Activated T-helper 2 cell treated with anti-CD3 and anti-CD28 coated beads, Interferon-gamma antibody, Interleukin-2, Interleukin-4, amounts not matched to agents 10 μg/mL and 5 μg/mL and 100 μg/mL, durations not matched to agents 14 hours and 24 hours and 36 hours (primary cell): ENCODE measurements at regions of chr9 and their contacts with region 1.

Region 1: DNA sequence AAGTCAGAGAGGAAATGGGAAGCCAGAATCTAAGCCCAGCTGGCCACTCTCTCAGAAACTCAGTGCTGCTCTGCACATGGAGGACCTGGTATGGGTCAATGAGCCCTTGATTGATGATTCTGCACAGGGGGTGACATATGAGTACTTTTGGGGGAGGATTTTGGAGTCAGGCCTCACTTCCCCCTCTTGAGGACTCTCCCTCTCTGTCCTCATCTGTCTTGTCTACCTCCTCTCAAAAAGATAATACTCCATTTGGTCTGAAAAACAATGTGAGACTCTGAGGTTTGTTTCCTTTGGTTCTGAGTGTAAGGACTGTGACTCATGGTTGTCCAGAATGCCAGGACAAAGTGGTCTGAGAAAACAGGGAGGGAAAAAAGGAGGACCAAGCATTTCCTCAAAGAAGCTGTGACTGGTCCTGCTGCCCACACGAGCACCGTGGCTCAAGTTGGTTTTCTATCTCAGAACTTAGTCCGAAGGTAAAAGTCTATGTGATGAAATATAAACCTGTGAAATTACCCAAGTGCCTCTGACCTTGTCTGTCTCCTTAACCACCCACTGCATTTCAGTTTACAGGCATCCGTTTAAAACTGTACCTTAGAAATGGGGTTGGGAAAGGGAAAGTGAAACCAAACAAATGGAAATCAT is 11.1 kb downstream of the TTC39B start:
- DNase-seq: no peak
- H3K4me3 Mint-ChIP-seq: peak overlapping the region; percentile 70
- H3K27ac Mint-ChIP-seq: peak overlapping the region; percentile 98
- H3K4me1 Mint-ChIP-seq: peaks cover 71% of the 10 kb centered on the region
- H3K27me3 Mint-ChIP-seq: no peaks in the 10 kb centered on the region

Region 2: GRCh38 chr9:14670718-14671117 is 625.2 kb before region 1 on chr9:
- intact Hi-C with region 1: loop called (anchors 5 kb)
- DNase-seq: no peak
- H3K4me3 Mint-ChIP-seq: no peak overlapping the region
- H3K27ac Mint-ChIP-seq: peak overlapping the region; percentile 62
- H3K4me1 Mint-ChIP-seq: peaks cover 10% of the 10 kb centered on the region
- H3K27me3 Mint-ChIP-seq: no peaks in the 10 kb centered on the region

Region 3: DNA sequence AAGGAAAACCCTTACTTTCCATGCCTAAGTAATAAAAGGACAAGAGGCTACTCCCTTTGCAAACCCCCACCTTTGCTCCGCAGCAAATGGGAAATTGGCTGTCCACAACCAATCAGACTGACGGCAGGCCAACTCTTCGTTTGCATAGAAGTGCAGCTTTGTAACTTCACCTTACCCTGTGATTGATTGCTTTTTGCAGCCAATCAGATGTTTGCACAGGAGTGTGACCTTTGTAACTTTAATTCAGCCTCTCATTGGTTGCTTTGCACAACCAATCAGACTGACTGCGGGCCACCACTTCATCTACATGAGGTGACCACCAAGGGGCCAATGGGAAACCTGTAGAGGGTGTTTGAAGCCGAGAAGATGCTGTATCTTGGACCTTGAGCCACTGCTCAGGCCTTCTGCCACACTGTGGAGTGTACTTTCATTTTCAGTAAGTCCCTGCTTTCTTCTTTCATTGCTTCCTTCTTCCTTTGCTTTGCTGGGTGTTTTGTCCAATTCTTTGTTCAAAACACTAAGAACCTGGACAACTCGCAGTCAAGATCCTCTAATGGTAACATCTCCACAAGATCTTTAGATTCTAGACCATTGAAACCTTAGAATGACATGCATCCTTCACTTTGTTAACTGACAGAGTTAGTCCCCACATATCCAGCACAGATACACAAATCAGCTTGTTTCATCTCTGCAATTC is 334.4 kb before region 1 on chr9:
- intact Hi-C with region 1: no loop called
- DNase-seq: no peak
- H3K4me3 Mint-ChIP-seq: no peak overlapping the region
- H3K27ac Mint-ChIP-seq: no peak overlapping the region
- H3K4me1 Mint-ChIP-seq: peaks cover 21% of the 10 kb centered on the region
- H3K27me3 Mint-ChIP-seq: no peaks in the 10 kb centered on the region

Region 4: DNA sequence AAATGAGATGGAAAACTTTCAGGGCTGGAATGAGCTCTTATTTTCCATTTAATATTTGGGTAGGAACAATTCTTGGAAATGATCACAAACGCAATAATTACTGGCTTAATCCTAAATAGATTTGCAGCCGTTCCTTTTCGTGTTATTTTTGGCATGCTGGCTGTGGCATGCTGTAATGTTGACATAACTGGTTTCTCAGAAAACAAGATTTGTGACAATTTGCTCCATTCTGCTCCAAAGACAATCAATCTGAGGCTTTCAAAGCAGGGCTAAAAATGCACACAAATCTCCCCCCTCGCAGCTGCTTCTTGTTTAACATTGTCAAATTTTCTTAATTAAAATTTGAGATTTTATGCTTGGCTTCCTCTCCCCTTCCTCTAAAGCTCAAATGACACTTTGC is 140.1 kb before region 1 on chr9:
- intact Hi-C with region 1: no loop called
- DNase-seq: no peak
- H3K4me3 Mint-ChIP-seq: no peak overlapping the region
- H3K27ac Mint-ChIP-seq: no peak overlapping the region
- H3K4me1 Mint-ChIP-seq: no peaks in the 10 kb centered on the region
- H3K27me3 Mint-ChIP-seq: peaks cover 10% of the 10 kb centered on the region

Region 5: GRCh38 chr9:15205632-15206420 is 90.1 kb before region 1 on chr9:
- intact Hi-C with region 1: no loop called
- DNase-seq: no peak
- H3K4me3 Mint-ChIP-seq: no peak overlapping the region
- H3K27ac Mint-ChIP-seq: peak overlapping the region; percentile 29
- H3K4me1 Mint-ChIP-seq: peaks cover 14% of the 10 kb centered on the region
- H3K27me3 Mint-ChIP-seq: no peaks in the 10 kb centered on the region

Region 6: DNA sequence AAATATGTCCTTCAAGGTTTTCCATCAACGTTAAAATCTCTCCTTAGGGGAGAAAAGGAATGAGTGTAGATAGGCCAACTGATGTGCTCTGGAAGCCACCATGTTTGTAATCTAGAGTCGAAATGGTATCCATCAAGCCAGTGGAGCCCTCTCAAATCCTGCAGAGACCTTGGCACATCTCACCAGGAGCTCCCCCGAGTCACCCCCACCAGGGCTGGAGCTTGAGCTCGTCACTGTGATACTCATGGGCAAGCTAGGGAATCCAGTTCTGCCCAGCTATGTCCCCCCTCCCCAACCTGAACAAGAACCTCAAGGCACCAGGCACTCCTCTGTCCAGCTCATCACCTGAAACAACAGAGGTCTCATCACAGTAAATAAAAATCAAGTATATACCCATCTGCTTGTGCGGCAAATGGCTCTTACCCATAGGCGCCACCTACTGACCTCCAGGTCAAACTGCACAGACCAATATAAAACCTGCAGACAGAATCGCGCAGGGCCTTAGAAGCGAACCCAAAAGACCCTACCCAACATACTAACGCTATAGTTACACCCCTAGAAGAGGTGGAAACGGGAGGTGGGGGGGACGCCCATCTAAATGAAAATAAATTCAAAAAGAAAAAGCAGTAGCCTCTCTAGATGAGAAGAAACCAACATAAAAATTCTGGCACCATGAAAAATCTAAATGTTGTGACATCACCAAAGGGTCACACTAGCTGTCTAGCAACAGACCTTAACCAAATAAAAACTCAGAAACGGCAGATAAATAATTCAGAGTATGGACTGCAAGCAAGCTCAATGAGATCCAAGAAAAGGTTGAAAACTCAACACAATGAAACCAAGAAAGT is 63.9 kb before region 1 on chr9:
- intact Hi-C with region 1: loop called (anchors 1 kb)
- DNase-seq: no peak
- H3K4me3 Mint-ChIP-seq: no peak overlapping the region
- H3K27ac Mint-ChIP-seq: no peak overlapping the region
- H3K4me1 Mint-ChIP-seq: peaks cover 25% of the 10 kb centered on the region
- H3K27me3 Mint-ChIP-seq: no peaks in the 10 kb centered on the region

Region 7: GRCh38 chr9:15268317-15268716 is 27.6 kb before region 1 on chr9:
- intact Hi-C with region 1: no loop called
- DNase-seq: no peak
- H3K4me3 Mint-ChIP-seq: no peak overlapping the region
- H3K27ac Mint-ChIP-seq: no peak overlapping the region
- H3K4me1 Mint-ChIP-seq: peaks cover 14% of the 10 kb centered on the region
- H3K27me3 Mint-ChIP-seq: no peaks in the 10 kb centered on the region

Region 8: DNA sequence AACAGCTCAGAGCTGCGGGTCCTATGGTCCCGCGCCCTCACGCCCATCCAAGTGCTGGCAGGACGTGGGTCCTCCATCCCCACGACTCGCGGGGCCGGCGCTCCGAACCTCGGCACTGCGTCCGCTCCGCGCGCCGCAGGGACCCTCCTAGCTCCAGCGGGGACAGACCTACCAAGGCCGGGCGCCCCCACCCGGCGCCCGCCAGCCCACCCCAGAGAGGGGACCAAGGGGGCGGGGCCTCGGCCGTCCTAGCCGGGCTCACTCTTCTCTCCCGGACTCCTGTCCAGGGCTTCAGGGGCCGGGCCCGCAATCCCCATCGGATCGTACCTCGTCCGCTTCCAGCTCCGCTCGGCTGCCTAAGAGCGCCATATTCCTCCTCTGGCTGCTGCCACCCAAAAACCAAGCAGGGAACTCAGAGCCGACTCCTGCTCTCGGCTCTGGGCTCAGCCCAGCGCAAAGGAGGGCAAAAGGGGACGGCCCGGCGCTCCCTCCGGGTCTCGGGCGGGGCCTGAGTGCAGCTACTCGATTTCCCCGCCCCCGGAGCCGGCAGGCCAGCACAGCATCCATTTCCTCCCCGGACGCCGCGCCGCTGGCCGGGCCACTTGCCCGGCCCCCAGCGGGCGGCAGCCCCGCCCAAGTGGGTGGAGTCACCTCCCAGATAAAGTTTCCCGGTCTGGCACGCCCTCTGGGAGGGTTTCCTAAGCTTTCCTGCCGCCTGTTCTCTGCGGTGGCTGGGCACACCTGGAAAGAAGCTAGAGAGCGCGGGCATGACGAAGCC is 11.1 kb after region 1 on chr9 and contains the start of gene TTC39B:
- intact Hi-C with region 1: loop called (anchors 1 kb)
- DNase-seq: peak; percentile 79
- H3K4me3 Mint-ChIP-seq: peak within 1 kb of the TSS; percentile 98
- H3K27ac Mint-ChIP-seq: peak within 1 kb of the TSS; percentile 94
- H3K4me1 Mint-ChIP-seq: peaks cover 49% of the 10 kb centered on the region
- H3K27me3 Mint-ChIP-seq: no peaks in the 10 kb centered on the region
- total RNA-seq, gene TTC39B: 8.9 and 10.5 TPM in 2 replicates

Region 9: GRCh38 chr9:15510789-15511575 is 215.1 kb after region 1 on chr9 and contains the start of gene PSIP1:
- intact Hi-C with region 1: loop called (anchors 1 kb)
- DNase-seq: peak; percentile 87
- H3K4me3 Mint-ChIP-seq: peak within 1 kb of the TSS; percentile 90
- H3K27ac Mint-ChIP-seq: peak within 1 kb of the TSS; percentile 98
- H3K4me1 Mint-ChIP-seq: peaks cover 46% of the 10 kb centered on the region
- H3K27me3 Mint-ChIP-seq: no peaks in the 10 kb centered on the region
- total RNA-seq, gene PSIP1: 112 and 118 TPM in 2 replicates